CD8-positive, alpha-beta T cell (primary cell): ENCODE measurements at regions of chr15 and their contacts with region 1.

Region 1: GRCh38 chr15:40952901-40953712 is at the start of gene CHAC1:
- DNase-seq: peak; percentile 84 to 97 (median 94)
- ATAC-seq: peak; percentile 96
- H3K4me3 ChIP-seq: peak within 1 kb of the TSS; percentile 68 to 73
- H3K4me3 Mint-ChIP-seq: peak within 1 kb of the TSS; percentile 93
- H3K27ac ChIP-seq: peak within 1 kb of the TSS in 1 of 2 experiments; percentile 43
- H3K27ac Mint-ChIP-seq: peak within 1 kb of the TSS; percentile 73
- H3K4me1 ChIP-seq: peaks cover 12% of the 10 kb centered on the region
- H3K4me1 Mint-ChIP-seq: peaks cover 16% of the 10 kb centered on the region
- H3K27me3 ChIP-seq: no peaks in the 10 kb centered on the region
- H3K27me3 Mint-ChIP-seq: no peaks in the 10 kb centered on the region
- CTCF ChIP-seq: peak; percentile 20
- total RNA-seq, gene CHAC1: 0.22 to 0.69 TPM

Region 2: DNA sequence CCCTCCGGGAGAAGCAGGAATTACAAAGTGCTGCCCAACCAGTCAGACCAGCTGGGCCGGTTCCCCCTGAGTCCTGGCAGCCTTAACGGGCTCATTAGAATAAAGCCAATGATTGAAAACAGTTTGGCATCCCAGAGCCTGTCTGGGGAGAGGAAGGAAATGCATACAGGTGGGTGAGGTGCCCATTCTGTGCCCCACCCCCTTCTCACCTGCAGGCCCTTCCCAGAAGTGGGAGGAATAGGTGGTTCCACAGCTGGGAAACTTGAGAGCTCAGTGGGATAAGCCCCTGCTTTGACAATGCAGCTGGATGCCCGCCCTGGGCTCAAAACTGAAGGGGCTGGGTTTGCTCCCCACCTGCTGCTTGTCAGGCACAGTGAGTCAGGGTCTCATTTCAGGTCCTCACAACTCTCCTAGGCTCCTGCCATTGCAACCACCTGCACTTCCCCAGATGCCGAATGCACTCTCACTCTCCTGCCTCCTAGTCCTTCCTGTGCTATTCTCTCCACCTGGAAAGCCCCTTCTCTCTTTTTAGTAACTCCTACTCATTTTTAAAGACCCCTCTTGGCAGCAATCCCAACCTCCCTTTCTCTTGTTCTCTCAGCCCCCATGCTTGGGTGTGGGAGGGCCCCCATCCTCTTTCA is 797.7 kb before region 1 on chr15:
- CTCF ChIA-PET with region 1: no interaction called
- POLR2A ChIA-PET with region 1: no interaction called
- intact Hi-C with region 1: loop called in 1 of 2 experiments (anchors 5 kb)
- DNase-seq: no peak
- ATAC-seq: no peak
- H3K4me3 ChIP-seq: no peak overlapping the region
- H3K4me3 Mint-ChIP-seq: no peak overlapping the region
- H3K27ac ChIP-seq: no peak overlapping the region
- H3K27ac Mint-ChIP-seq: no peak overlapping the region
- H3K4me1 ChIP-seq: peaks cover under 1% of the 10 kb centered on the region
- H3K4me1 Mint-ChIP-seq: no peaks in the 10 kb centered on the region
- H3K27me3 ChIP-seq: no peaks in the 10 kb centered on the region
- H3K27me3 Mint-ChIP-seq: no peaks in the 10 kb centered on the region
- CTCF ChIP-seq: no peak

Region 3: DNA sequence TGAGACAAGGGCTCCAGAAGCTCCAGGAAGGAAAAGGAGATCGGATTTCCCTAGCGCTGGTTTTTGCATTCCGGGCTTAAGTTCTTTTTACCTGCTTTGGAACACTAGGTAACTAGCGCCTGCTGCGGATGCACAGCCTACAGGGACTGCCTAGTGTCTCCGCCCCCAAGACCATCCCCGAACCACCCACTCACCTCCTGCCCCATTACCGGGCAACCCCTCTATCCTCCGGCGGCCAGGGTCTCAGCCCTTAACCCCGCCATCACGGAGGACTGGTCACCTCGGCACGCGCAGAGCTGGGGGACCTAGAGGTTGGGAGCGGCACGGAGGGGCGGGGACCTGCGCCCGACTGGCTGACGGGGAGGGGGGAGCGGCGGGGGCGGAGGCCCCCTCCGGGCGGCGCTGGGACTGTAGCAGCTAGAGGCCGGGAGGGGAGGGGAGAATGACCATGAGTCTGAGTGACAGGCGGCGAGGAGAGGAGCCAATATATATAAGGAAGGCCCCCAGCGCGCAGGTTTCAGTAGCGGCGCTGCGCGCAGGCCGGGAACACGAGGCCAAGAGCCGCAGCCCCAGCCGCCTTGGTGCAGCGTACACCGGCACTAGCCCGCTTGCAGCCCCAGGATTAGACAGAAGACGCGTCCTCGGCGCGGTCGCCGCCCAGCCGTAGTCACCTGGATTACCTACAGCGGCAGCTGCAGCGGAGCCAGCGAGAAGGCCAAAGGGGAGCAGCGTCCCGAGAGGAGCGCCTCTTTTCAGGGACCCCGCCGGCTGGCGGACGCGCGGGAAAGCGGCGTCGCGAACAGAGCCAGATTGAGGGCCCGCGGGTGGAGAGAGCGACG is 24.1 kb before region 1 on chr15 and contains the start of gene DLL4:
- CTCF ChIA-PET with region 1: interaction called, 4 read pairs
- POLR2A ChIA-PET with region 1: interaction called, 4 read pairs
- intact Hi-C with region 1: loop called in 1 of 2 experiments (anchors 1 kb)
- DNase-seq: peak in 4 of 9 experiments; percentile 37 to 59 (median 50)
- ATAC-seq: peak; percentile 50
- H3K4me3 ChIP-seq: peak within 1 kb of the TSS; percentile 38 to 63
- H3K4me3 Mint-ChIP-seq: peak within 1 kb of the TSS; percentile 83
- H3K27ac ChIP-seq: no peak within 1 kb of the TSS
- H3K27ac Mint-ChIP-seq: no peak within 1 kb of the TSS
- H3K4me1 ChIP-seq: peaks cover 60% of the 10 kb centered on the region
- H3K4me1 Mint-ChIP-seq: peaks cover 51% of the 10 kb centered on the region
- H3K27me3 ChIP-seq: peaks cover 44 to 62% of the 10 kb centered on the region in 2 experiments
- H3K27me3 Mint-ChIP-seq: peaks cover 63% of the 10 kb centered on the region
- CTCF ChIP-seq: no peak
- total RNA-seq, gene DLL4: 0.08 TPM

Region 4: GRCh38 chr15:41989259-41989933 is 1036.3 kb after region 1 on chr15:
- CTCF ChIA-PET with region 1: no interaction called
- POLR2A ChIA-PET with region 1: no interaction called
- intact Hi-C with region 1: no loop called
- DNase-seq: peak; percentile 64 to 88 (median 77)
- ATAC-seq: peak; percentile 99
- H3K4me3 ChIP-seq: no peak overlapping the region
- H3K4me3 Mint-ChIP-seq: no peak overlapping the region
- H3K27ac ChIP-seq: no peak overlapping the region
- H3K27ac Mint-ChIP-seq: no peak overlapping the region
- H3K4me1 ChIP-seq: no peaks in the 10 kb centered on the region
- H3K4me1 Mint-ChIP-seq: no peaks in the 10 kb centered on the region
- H3K27me3 ChIP-seq: peaks cover 0 to 2% of the 10 kb centered on the region in 2 experiments
- H3K27me3 Mint-ChIP-seq: peaks cover 3% of the 10 kb centered on the region
- CTCF ChIP-seq: peak; percentile 90